Astrocyte of the cerebellum (primary cell): ENCODE measurements at regions of chr6 and their contacts with region 1.

Region 1: DNA sequence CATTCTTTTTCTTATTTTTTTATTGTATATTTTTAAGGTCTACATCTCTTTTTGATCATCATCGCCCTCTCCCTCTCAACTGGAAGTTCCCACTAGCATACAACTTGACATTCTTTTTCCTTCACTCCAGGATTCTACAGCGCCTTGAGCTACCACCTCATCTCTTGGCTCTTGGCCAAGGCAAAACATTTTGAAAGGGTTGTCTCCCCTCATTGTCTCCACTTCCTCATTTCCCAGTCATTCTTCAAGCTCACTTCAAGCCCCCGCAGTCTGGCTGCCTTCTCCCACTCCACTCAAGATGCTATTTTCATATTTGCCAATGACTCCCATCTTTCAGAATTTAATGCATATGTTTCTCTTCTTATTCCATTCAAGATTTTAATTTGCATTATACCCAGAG is 63.0 kb downstream of the OPN5 start:
- DNase-seq: no peak
- H3K4me3 ChIP-seq: no peak overlapping the region
- CTCF ChIP-seq: no peak

Region 2: GRCh38 chr6:47780510-47781356 is 64.1 kb before region 1 on chr6:
- in situ Hi-C with region 1: no loop called
- DNase-seq: peak; percentile 53
- H3K4me3 ChIP-seq: no peak overlapping the region
- CTCF ChIP-seq: peak; percentile 71

Region 3: GRCh38 chr6:47890326-47890875 is 45.5 kb after region 1 on chr6:
- in situ Hi-C with region 1: loop called (anchors 5 kb)
- DNase-seq: no peak
- H3K4me3 ChIP-seq: no peak overlapping the region
- CTCF ChIP-seq: no peak